Heart right ventricle (tissue), 16 donors: ENCODE measurements at regions of chr17 and their contacts with region 1.

Region 1: DNA sequence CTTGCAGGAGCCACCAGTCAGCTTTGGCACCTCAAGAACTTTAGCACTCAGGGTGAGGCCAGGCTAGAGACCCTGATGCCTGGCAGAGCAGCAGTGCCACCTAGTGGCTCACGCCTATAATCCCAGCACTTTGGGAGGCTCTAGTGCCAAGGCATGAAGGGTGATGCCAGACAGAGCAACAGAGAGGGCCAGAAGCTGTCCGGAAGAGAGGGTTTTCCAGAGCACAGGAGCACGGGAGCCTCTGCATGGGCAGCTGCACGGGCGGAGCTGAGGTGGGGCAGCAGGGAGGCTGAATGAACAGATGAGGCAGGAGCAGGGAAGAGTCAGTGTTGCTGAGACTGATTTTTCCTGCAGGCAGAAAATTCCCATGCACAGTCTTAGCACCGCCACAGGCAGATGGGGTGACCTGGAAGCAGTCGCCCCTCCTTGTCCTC is 38.9 kb downstream of the MYH3 start:
- DNase-seq: peak; percentile 38 to 53
- ATAC-seq: peak; percentile 67 to 90 (median 86)
- H3K4me3 ChIP-seq: no peak overlapping the region
- H3K27ac ChIP-seq: no peak overlapping the region
- H3K4me1 ChIP-seq: peaks cover 0 to 12% (median 2%) of the 10 kb centered on the region in 9 donors
- H3K27me3 ChIP-seq: peaks cover 0 to 6% (median 0%) of the 10 kb centered on the region in 7 donors
- CTCF ChIP-seq: peak; percentile 61 to 90 (median 86)

Region 2: DNA sequence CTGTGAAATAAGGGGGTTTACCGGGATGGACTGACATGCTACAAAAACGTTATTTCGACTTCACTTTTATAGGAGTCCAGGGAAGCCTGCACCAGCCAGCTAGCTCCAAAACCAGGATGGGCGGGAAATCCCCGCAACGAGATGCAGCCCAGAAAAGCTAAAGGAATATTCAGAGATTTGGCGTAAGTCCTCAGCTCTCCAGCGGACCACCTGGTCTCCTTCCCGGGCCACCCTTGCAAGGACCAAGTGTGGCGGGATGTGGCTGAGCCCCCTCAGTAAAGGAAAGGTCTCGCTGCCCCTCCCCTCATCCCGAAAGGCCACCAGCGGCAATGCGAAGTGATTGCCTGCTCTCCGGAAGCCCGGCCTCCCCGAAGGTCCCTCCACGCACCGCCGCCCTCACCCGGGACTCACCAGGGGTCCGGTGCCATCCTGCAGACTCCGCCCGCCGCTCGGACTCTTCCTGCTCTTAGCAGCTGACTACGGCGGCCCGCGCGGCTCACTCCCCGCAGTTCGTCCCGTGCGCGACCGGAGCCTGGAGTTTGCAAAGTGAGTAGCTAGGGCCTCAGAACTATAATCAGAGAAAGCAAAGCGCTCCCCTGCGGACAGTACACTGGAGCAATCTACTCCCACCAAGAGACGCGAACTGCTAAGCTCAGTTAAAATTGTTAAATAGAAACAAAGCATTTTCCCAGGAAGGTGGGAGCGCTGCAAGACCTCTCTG is 1042.7 kb before region 1 on chr17 and contains the start of gene STX8:
- intact Hi-C with region 1: loop called in 1 of 10 experiments (anchors 5 kb)
- DNase-seq: peak; percentile 93
- ATAC-seq: peak; percentile 91 to 97 (median 95)
- H3K4me3 ChIP-seq: peak within 1 kb of the TSS; percentile 48 to 98 (median 74)
- H3K27ac ChIP-seq: peak within 1 kb of the TSS in 9 of 10 donors; percentile 13 to 86 (median 61)
- H3K4me1 ChIP-seq: peaks cover 0 to 32% (median 22%) of the 10 kb centered on the region in 9 donors
- H3K27me3 ChIP-seq: no peaks in the 10 kb centered on the region
- CTCF ChIP-seq: no peak
- total RNA-seq, gene STX8: 53.3 to 77.6 (median 63.9) TPM

Region 3: DNA sequence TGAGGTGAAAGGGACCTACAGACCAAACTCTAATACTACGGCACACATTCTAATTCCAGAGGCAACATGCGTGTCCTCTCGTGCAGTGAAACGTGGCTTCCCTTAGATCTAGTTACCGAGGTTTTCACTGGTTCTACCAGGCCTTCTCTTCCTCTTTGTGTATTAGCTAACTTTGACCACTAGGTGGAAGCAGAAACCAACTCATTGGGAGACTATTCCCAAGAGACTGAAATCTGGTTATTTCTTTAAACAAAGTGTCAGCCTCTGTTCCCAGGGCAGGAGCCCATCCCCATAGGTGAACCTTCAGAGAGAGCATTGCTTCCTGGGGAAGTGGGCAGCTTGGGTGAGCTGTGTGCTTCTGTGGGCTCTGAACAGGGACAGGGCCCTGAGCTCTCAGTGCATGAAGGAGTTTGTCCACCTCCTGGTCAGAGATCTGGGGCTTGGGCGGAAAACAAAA is 693.5 kb before region 1 on chr17:
- intact Hi-C with region 1: loop called in 9 of 10 experiments (anchors 2 to 10 kb)
- DNase-seq: no peak
- ATAC-seq: peak in 6 of 8 donors; percentile 39 to 70 (median 59)
- H3K4me3 ChIP-seq: no peak overlapping the region
- H3K27ac ChIP-seq: no peak overlapping the region
- H3K4me1 ChIP-seq: peaks cover 0 to 4% (median 0%) of the 10 kb centered on the region in 9 donors
- H3K27me3 ChIP-seq: no peaks in the 10 kb centered on the region
- CTCF ChIP-seq: peak; percentile 75 to 86 (median 83)

Region 4: DNA sequence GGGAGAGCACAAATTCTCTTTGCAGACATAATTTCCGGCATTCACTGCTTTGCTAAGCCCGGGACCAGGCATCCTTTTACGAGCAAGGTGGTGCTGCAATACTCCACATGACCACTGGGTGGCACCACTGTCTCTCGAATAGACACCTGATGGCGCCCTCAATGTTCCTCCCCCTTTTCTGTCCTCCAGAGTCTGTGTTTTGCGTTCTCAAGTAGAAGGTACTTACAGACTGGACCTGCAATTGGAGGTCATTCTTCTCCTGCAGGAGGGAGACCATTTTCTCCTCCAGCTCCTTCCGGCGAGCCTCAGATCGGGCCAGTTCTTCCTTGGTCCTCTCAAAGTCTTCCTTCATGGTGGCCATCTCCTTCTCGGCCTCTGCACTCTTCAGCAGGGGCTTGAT is 290.6 kb before region 1 on chr17:
- intact Hi-C with region 1: loop called (anchors 2 to 10 kb)
- DNase-seq: peak; percentile 73 to 76
- ATAC-seq: peak in 7 of 8 donors; percentile 53 to 75 (median 67)
- H3K4me3 ChIP-seq: no peak overlapping the region
- H3K27ac ChIP-seq: no peak overlapping the region
- H3K4me1 ChIP-seq: no peaks in the 10 kb centered on the region
- H3K27me3 ChIP-seq: peaks cover 0 to 15% (median 4%) of the 10 kb centered on the region in 7 donors
- CTCF ChIP-seq: peak; percentile 78 to 97 (median 89)

Region 5: DNA sequence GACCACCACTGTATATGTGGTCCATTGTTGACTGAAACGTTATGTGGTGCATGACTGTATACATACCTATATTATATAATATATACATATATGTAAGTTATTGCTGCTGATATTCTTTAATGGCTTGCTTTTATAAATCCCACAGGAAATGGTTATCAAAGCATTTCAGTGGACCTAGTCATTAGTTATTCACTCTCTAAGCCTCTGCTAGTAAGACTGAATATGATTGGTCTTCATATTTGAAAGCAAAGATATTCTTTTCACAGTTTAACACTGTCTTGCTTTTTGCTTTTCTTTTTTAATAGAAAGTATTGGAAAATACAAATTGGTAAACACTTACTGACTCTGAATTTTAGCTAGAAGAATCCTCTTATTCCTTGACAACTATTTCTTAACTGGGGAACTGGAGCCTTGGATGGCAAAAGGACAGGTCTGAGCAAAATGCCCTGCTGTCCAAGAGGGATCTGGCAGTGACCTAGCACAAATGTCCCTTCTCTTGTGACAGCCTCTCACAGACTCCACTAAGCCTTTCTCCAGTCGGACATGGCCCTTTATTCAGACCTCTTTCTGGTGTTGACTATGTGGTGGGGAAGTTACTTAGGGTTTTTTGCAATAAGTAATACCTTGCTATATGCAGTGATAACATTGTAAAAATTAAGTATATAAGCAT is 54.1 kb before region 1 on chr17:
- intact Hi-C with region 1: no loop called
- DNase-seq: no peak
- ATAC-seq: no peak
- H3K4me3 ChIP-seq: no peak overlapping the region
- H3K27ac ChIP-seq: no peak overlapping the region
- H3K4me1 ChIP-seq: no peaks in the 10 kb centered on the region
- H3K27me3 ChIP-seq: no peaks in the 10 kb centered on the region
- CTCF ChIP-seq: no peak

Region 6: DNA sequence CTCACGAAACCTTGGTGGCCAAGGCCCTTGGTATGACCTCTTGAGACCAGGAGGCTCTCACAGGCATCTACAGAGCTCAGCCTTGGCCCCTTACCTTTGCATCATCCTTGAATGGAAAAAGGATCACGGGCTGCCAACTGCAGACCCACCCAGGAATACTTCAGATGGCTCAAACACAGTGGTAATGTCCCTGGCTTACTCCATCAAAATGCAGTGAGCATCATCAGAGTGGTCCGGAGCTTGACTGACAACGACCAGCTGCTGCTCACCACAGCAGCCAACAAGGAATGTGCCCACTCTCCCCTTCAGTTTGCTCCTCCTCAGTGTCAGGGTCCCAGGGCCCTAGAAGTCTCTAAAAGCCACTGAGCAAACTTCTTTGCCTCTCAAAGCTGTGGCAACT is 56.5 kb after region 1 on chr17:
- intact Hi-C with region 1: loop called in 1 of 10 experiments (anchors 2 kb)
- DNase-seq: no peak
- ATAC-seq: no peak
- H3K4me3 ChIP-seq: no peak overlapping the region
- H3K27ac ChIP-seq: no peak overlapping the region
- H3K4me1 ChIP-seq: no peaks in the 10 kb centered on the region
- H3K27me3 ChIP-seq: no peaks in the 10 kb centered on the region
- CTCF ChIP-seq: no peak